Mammary epithelial cell (primary cell): ENCODE measurements at regions of chr5 and their contacts with region 1.

Region 1: GRCh38 chr5:98768160-98769005 is 5.1 kb upstream of the RGMB start:
- DNase-seq: no peak
- H3K4me3 ChIP-seq: peak overlapping the region; percentile 62 to 73 (median 65)
- H3K27ac ChIP-seq: no peak overlapping the region
- H3K4me1 ChIP-seq: peaks cover 30% of the 10 kb centered on the region
- H3K27me3 ChIP-seq: no peaks in the 10 kb centered on the region
- CTCF ChIP-seq: peak; percentile 94 to 97

Region 2: DNA sequence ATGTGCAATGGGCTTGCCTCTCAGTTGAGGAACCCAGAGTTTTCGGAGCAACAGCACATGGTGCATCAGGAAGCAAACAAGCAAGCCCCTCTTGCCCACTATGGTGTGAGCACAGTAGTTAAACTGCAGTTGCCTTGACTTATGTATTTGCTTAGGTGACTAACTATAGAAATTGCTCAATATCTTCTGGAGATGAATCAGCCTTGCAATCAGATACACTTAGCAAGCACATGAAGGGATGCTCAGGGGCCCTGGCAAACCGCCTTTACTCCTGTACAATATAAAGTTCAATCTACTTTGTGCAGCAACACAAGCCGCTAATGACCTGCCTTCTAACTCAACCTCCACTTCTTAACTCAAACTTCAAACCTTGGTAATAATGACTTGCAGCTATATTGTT is 1003.7 kb before region 1 on chr5:
- CTCF ChIA-PET with region 1: no interaction called
- dilution Hi-C with region 1: no loop called
- in situ Hi-C with region 1: no loop called
- intact Hi-C with region 1: no loop called
- DNase-seq: peak; percentile 61
- H3K4me3 ChIP-seq: no peak overlapping the region
- H3K27ac ChIP-seq: no peak overlapping the region
- H3K4me1 ChIP-seq: no peaks in the 10 kb centered on the region
- H3K27me3 ChIP-seq: no peaks in the 10 kb centered on the region
- CTCF ChIP-seq: no peak

Region 3: GRCh38 chr5:98109561-98110006 is 658.8 kb before region 1 on chr5:
- CTCF ChIA-PET with region 1: interaction called, 3 read pairs
- dilution Hi-C with region 1: no loop called
- in situ Hi-C with region 1: no loop called
- intact Hi-C with region 1: loop called (anchors 1 kb)
- DNase-seq: peak; percentile 72
- H3K4me3 ChIP-seq: no peak overlapping the region
- H3K27ac ChIP-seq: peak overlapping the region; percentile 78
- H3K4me1 ChIP-seq: peaks cover 42% of the 10 kb centered on the region
- H3K27me3 ChIP-seq: no peaks in the 10 kb centered on the region
- CTCF ChIP-seq: no peak

Region 4: DNA sequence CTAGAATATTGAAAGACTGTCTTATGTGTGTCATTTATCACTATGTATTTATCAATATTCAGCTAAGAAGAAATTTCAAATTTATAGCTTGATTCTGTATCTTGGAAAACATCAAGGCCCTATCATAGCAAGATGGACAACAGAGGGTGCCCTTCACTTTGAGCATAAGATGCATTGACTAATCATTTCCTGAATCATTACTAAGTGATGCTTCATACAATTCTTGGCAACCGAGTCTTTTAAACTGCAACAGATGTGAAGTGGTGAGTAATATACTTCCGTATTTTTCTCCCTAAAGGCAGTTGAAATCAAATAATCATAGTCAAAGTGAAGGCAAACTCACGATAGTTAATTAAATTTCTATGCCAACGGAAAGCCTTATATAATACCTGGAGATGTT is 313.5 kb before region 1 on chr5:
- CTCF ChIA-PET with region 1: interaction called, 10 read pairs
- dilution Hi-C with region 1: no loop called
- in situ Hi-C with region 1: loop called in 1 of 2 experiments (anchors 25 kb)
- intact Hi-C with region 1: loop called (anchors 1 kb)
- DNase-seq: peak; percentile 88
- H3K4me3 ChIP-seq: no peak overlapping the region
- H3K27ac ChIP-seq: peak overlapping the region; percentile 52
- H3K4me1 ChIP-seq: peaks cover 11% of the 10 kb centered on the region
- H3K27me3 ChIP-seq: no peaks in the 10 kb centered on the region
- CTCF ChIP-seq: peak; percentile 24 to 56

Region 5: GRCh38 chr5:99060306-99061261 is 292.2 kb after region 1 on chr5:
- CTCF ChIA-PET with region 1: interaction called, 3 read pairs
- dilution Hi-C with region 1: no loop called
- in situ Hi-C with region 1: no loop called
- intact Hi-C with region 1: loop called (anchors 2 kb)
- DNase-seq: peak; percentile 55
- H3K4me3 ChIP-seq: no peak overlapping the region
- H3K27ac ChIP-seq: peak overlapping the region; percentile 62
- H3K4me1 ChIP-seq: peaks cover 21% of the 10 kb centered on the region
- H3K27me3 ChIP-seq: no peaks in the 10 kb centered on the region
- CTCF ChIP-seq: peak; percentile 84 to 91

Region 6: GRCh38 chr5:99102073-99102697 is 333.8 kb after region 1 on chr5:
- CTCF ChIA-PET with region 1: no interaction called
- dilution Hi-C with region 1: no loop called
- in situ Hi-C with region 1: no loop called
- intact Hi-C with region 1: no loop called
- DNase-seq: no peak
- H3K4me3 ChIP-seq: no peak overlapping the region
- H3K27ac ChIP-seq: no peak overlapping the region
- H3K4me1 ChIP-seq: no peaks in the 10 kb centered on the region
- H3K27me3 ChIP-seq: no peaks in the 10 kb centered on the region
- CTCF ChIP-seq: no peak

Region 7: DNA sequence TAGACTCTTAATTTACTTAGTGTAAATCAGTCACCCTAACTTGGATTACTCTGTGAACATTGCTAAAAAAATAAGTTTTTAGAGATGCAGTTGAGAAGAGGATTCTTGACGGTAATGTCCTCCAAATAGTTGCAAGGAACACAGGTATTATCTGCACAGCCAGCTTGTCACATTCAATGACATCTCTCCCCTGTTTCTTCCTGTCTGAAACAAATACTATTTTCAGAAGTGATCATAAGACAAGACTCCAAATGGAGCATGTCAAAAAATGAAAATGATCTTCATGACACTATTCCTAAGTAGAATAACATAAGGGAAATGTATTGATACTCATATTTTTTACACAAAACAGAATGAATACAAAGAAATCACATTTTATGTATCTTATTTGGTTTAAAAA is 388.3 kb after region 1 on chr5:
- CTCF ChIA-PET with region 1: no interaction called
- dilution Hi-C with region 1: no loop called
- in situ Hi-C with region 1: no loop called
- intact Hi-C with region 1: no loop called
- DNase-seq: no peak
- H3K4me3 ChIP-seq: no peak overlapping the region
- H3K27ac ChIP-seq: no peak overlapping the region
- H3K4me1 ChIP-seq: no peaks in the 10 kb centered on the region
- H3K27me3 ChIP-seq: peaks cover 2% of the 10 kb centered on the region
- CTCF ChIP-seq: no peak

Region 8: DNA sequence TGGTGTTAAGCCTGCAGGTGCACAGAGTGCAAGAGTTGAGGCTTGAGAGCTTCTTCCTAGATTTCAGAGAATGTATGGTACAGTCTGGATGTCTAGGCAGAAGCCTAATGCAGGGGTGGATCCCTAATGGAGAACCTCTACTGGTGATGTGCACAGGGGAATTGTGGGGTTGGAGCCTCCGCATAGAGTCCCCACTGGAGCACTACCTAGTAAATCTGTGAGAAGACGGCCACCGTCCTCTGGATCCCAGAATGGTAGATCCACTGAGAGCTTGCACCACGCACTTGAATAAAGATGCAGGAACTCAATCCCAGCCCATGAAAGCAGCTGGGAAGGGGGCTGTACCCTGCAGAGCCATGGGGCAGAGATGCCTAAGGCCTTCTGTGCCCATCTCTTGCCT is 1067.4 kb after region 1 on chr5:
- CTCF ChIA-PET with region 1: no interaction called
- dilution Hi-C with region 1: no loop called
- in situ Hi-C with region 1: no loop called
- intact Hi-C with region 1: no loop called
- DNase-seq: no peak
- H3K4me3 ChIP-seq: no peak overlapping the region
- H3K27ac ChIP-seq: no peak overlapping the region
- H3K4me1 ChIP-seq: no peaks in the 10 kb centered on the region
- H3K27me3 ChIP-seq: no peaks in the 10 kb centered on the region
- CTCF ChIP-seq: no peak